Vagina (tissue), 2 donors: ENCODE measurements at regions of chr20 and their contacts with region 1.

Region 1: DNA sequence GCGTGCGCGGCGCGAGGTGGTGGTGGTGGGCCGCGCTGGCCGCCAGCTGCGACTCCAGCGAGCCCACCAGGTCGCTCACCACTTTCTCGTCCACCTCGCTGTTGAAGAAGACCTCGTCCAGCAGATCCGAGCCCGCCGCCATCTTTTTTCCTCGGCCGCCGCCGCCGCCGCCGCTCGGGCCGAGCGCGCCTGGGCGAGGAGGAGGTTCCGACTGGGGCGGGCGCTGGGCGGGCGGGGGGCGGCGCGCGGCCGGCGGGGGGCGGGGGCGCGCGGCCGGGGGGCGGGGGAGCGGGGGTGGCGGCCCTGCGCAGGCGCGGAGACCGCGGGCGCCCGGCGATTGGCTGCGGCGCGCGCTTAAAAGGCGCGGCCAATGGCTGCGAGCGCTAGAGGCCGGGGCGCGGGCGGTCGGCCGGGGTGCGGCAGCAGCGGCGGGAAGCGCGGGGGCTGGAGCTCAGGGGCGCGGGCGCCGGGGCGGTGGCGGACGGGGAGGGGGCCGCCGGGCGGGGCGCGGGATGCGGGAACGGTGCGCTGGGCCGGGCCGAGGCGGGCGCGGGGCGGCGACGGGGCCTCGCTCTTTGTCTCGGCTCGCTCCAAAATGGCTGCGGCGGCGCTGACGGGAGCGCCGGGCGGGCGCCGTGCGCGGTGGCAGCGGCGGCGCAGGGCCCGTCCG is at the start of gene TAF4:
- DNase-seq: no peak
- H3K4me3 ChIP-seq: peak within 1 kb of the TSS; percentile 65 to 83
- H3K27ac ChIP-seq: peak within 1 kb of the TSS; percentile 79
- H3K4me1 ChIP-seq: peaks cover 60% of the 10 kb centered on the region
- H3K27me3 ChIP-seq: no peaks in the 10 kb centered on the region
- CTCF ChIP-seq: no peak
- POLR2A ChIP-seq: peak in 1 of 2 donors; percentile 81
- total RNA-seq, gene TAF4: 9.6 TPM

Region 2: GRCh38 chr20:62121776-62122631 is 56.2 kb after region 1 on chr20 and contains the start of gene LSM14B:
- intact Hi-C with region 1: loop called (anchors 5 kb)
- DNase-seq: peak in 1 of 2 donors; percentile 96
- H3K4me3 ChIP-seq: peak within 1 kb of the TSS; percentile 69 to 97
- H3K27ac ChIP-seq: peak within 1 kb of the TSS; percentile 89
- H3K4me1 ChIP-seq: peaks cover 30% of the 10 kb centered on the region
- H3K27me3 ChIP-seq: no peaks in the 10 kb centered on the region
- CTCF ChIP-seq: no peak
- POLR2A ChIP-seq: peak in 1 of 2 donors; percentile 65
- total RNA-seq, gene LSM14B: 23.6 TPM